Psoas muscle (tissue), 8 donors: ENCODE measurements at regions of chr2 and their contacts with region 1.

Region 1: DNA sequence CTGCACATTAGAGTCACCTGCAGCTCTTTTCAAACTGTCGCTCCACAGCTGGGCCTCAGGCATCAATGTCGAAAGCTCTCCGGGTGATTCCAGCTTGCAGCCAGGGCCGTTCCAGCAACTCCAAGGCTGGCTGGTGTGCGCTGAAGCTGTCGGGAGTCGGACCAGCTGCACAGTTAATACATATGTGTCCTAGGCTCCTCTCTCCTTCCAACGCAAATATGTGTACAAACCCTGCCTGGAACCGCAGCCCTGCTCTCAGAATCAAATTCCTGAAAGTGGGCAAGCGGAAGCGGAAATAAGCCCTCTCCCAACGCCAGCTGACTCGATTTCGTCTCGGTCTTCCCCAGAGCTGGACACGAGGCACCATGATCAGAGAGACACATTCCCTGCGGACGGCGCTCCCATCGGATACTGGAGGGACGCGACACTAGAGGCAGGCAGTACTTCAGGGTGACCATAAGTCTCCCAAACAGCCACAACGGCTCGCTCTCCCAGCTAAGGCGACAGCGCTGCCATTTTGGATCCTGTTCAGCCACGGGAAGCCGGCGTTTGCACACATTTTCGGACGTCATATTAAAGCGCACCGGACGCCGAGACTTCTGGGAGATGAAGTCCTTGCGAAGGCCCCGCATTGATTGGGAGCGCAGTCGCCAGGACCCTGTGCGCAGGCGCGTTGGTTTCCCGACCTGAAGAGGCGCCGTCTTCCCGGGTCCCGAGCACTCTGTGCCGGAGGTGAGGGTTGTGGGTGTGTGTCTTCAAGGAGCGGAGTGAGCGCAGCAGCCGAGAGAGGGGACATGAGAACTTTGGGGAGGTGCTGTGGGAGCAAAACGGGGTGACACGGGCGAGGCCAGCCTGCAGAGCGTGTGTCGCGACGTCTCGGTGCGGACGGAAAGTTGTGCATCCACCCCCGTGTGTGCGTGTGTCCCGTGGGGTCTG is at the start of gene ZNF2:
- DNase-seq: peak; percentile 98 to 99
- ATAC-seq: peak; percentile 98 to 99 (median 98)
- H3K4me3 ChIP-seq: peak within 1 kb of the TSS; percentile 90
- H3K27ac ChIP-seq: peak within 1 kb of the TSS; percentile 100
- H3K4me1 ChIP-seq: peaks cover 19% of the 10 kb centered on the region
- H3K27me3 ChIP-seq: no peaks in the 10 kb centered on the region
- CTCF ChIP-seq: no peak
- total RNA-seq, gene ZNF2: 2.4 to 5.5 (median 2.9) TPM

Region 2: DNA sequence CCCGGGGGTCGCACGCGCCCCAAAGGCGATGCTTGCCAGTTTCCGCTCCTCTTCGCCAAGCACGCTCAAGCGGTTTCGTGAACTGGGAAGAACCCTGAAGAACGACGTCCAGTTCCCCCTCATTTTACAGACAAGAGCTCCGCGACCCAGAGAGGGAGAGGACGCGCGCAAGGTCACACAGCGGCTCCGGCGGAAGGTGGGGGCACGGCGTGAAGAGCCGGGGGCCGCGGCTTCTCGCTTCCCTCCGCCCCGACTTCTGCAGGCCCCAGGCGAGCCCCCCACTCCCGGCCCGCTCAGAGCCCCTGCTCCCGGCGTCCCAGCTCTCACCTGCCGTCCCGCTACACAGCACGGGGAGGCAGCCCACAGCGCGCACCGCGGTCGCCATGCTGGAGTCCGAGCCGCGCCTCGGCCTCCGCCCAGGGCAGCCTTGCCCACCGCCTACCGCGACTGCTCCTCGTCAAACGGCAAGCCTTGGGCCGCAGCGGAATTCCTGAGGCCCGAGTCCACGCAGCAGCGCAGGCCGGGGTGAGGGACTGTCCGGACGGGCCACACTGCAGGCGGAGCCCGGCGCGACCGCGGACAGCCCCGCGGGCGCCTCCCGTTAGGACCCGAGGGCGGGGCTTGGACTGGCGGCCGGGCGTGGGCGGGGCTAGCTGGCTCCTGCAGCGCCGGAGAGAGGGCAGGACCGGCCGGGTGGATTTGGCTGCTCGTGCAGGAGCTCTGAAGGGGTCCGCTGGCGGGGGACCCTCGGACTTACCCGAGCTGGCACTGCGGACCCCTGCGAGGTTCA is 43.8 kb before region 1 on chr2 and contains the start of gene MRPS5:
- intact Hi-C with region 1: no loop called
- DNase-seq: peak; percentile 88 to 95
- ATAC-seq: peak; percentile 97 to 98 (median 98)
- H3K4me3 ChIP-seq: peak within 1 kb of the TSS; percentile 92
- H3K27ac ChIP-seq: peak within 1 kb of the TSS; percentile 97
- H3K4me1 ChIP-seq: peaks cover 25% of the 10 kb centered on the region
- H3K27me3 ChIP-seq: no peaks in the 10 kb centered on the region
- CTCF ChIP-seq: no peak
- total RNA-seq, gene MRPS5: 45.6 to 79.0 (median 53.4) TPM

Region 3: DNA sequence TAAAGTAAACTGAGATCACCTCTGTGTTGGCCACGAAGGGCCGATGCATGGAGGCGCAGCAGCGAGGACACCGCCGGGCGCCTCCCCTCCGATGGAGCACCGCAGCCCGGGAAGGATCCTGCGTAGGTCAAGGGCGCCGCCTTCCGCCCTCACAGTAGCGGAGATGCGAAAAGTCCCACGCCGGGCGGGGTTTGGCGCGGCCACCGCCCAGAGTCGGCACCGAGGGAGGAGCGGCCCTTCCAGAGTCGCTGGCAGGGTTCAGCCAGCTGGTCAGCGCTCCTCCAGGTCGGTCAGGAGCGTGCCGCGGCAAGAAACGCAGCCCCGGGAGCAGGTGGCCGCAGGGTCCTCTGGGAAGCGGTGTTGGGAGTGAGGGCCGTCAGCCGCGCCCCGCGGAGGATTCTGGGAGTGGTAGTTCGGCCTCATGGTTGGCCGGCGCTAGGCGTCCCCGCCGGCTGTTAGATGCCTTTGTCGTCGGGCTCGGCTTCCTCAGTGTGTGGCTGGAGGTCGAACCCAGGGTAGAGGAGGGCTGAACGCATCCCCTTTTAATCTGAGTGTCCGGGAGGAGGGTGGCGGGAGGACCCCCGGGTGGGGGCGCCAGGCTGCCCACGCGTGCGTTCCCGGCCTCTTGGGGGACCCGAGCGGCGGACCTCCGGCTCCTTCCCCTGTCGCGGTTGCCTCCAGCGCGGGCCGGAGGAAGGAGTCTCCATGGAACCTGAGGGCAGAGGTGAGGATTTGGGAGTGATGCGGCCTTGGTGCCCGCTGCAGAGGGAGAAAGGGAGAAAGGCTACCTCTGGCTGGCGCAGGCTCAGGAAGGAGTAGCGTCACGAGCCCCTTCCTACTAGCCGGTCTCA is 41.9 kb after region 1 on chr2 and contains the start of gene ZNF892:
- intact Hi-C with region 1: loop called (anchors 2 to 5 kb)
- DNase-seq: peak; percentile 92 to 95
- ATAC-seq: peak; percentile 99 to 100 (median 99)
- H3K4me3 ChIP-seq: peak within 1 kb of the TSS; percentile 83
- H3K27ac ChIP-seq: peak within 1 kb of the TSS; percentile 91
- H3K4me1 ChIP-seq: peaks cover 3% of the 10 kb centered on the region
- H3K27me3 ChIP-seq: no peaks in the 10 kb centered on the region
- CTCF ChIP-seq: peak; percentile 34
- total RNA-seq, gene ZNF892: 0.76 to 2.5 (median 2.0) TPM

Region 4: DNA sequence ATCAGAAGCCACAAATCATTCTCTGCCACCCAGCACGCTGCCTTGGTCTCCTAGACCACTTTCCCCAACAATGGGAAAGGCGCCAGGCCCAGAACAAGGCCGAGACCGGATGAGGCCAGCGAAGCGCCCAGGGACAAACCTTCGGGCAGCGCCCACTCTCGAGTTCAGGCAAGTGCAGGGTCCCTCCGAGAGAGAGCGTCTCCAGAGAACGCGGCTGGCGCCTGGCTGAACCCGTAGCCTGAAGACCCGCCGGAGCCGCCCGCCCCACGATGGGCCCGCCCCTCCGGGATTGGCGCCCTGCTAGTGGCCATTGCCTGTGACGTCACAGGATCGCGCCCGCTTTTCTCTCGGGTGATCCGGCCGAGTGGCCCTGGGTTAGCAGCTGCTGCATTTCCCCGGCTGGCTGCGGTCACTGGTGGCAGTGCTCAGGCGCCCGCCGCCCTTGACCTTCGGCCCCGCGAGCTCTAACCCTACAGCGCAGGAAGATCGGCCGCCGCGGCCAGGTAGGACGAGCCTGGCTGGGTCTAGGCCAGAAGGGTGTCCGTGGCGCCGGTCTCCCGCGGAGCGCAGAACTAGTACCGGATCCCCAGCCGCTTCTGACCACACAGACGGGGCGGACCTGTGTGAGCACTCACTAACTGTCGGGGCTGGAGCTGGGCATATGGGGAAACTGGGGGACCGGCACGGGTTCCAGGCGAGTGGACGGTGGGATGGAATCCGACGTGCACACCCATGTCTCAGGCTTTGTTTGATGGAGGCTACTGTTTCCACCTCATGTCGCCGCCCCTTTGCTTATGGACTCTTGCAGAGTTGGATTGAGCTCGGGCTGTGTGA is 237.2 kb after region 1 on chr2 and contains the start of gene FAHD2A:
- intact Hi-C with region 1: loop called in 1 of 2 experiments (anchors 5 kb)
- DNase-seq: peak; percentile 98
- ATAC-seq: peak; percentile 99 to 100 (median 99)
- H3K4me3 ChIP-seq: peak within 1 kb of the TSS; percentile 97
- H3K27ac ChIP-seq: peak within 1 kb of the TSS; percentile 93
- H3K4me1 ChIP-seq: peaks cover 12% of the 10 kb centered on the region
- H3K27me3 ChIP-seq: no peaks in the 10 kb centered on the region
- CTCF ChIP-seq: no peak
- total RNA-seq, gene FAHD2A: 21.9 to 39.0 (median 29.8) TPM